Activated naive CD4-positive, alpha-beta T cell treated with anti-CD3 and anti-CD28 coated beads for 36 hours (primary cell): ENCODE measurements at regions of chr2 and their contacts with region 1.

Region 1: DNA sequence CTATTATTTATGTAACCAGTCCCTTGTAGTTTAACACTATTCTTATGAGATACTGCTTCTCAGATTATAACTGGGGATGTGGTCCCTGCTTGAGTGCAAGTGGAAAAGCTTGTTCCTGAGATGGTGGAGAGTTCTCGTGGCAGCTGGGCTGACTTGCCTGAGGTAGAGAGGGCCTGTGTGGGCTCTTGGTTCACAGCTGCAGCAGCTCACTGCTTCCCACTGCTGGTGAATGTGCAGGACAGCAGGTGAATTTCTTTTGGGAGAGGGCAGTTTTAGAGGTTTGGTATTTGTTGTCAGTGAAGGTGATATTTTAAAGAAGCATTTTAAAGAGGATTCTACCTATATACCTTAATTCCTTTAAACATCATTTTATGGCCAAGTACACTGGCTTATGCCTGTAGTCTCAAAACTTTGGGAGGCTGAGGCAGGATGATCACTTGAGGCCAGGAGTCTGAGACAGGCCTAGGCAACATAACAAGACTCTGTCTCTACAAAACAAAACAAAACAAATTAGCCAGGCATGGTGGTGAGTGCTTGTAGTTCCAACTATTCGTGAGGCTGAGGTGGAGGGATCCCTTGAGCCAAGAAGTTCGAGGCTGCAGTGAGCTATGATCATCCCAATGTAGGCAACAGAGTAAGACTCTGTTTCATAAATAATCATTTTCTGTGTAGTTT is 94.8 kb downstream of the MTA3 start:
- DNase-seq: peak; percentile 80
- H3K4me3 Mint-ChIP-seq: no peak overlapping the region
- H3K27ac Mint-ChIP-seq: peak overlapping the region; percentile 57
- H3K4me1 Mint-ChIP-seq: peaks cover 17% of the 10 kb centered on the region
- H3K27me3 Mint-ChIP-seq: no peaks in the 10 kb centered on the region

Region 2: DNA sequence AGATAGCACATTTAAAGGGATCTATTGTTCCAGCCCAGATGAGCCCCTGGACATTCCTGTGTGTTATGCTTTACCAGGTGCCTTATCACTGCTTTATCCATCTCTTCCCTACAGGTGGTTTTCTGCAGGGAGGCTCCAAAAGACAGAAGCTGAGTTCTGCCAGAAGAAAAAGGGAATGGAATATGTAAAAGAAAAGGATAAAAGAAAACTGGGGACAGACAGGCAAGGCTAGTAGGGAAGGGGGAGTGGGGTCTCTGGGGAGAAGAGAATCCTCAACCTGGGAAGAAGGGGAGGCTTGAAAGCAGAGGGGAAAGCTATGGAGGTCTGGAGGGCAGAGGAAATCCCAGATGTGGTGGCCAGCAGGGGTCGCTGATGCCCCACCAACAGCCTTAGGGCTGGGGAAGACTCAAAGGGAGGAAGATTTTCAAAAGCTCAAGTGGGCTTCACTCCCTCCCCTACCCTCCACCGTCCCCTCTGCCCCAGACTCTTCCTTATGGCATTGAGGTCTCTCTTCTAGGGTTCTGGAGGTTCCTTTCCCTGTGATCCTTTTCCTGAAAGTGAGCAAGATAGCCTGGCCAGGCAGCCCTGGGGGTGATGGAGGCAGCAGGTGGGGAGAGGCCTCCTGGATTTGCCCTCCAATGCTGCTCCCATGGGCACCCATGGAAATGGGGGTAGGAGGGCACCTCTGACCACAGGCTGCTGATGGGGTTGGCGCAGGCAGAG is 793.5 kb before region 1 on chr2:
- CTCF ChIA-PET with region 1: no interaction called
- intact Hi-C with region 1: loop called (anchors 5 kb)
- DNase-seq: peak; percentile 81
- H3K4me3 Mint-ChIP-seq: no peak overlapping the region
- H3K27ac Mint-ChIP-seq: no peak overlapping the region
- H3K4me1 Mint-ChIP-seq: no peaks in the 10 kb centered on the region
- H3K27me3 Mint-ChIP-seq: no peaks in the 10 kb centered on the region

Region 3: GRCh38 chr2:42513257-42513918 is 149.9 kb before region 1 on chr2:
- CTCF ChIA-PET with region 1: interaction called, 25 read pairs
- intact Hi-C with region 1: loop called (anchors 1 kb)
- DNase-seq: peak; percentile 32
- H3K4me3 Mint-ChIP-seq: no peak overlapping the region
- H3K27ac Mint-ChIP-seq: no peak overlapping the region
- H3K4me1 Mint-ChIP-seq: peaks cover 9% of the 10 kb centered on the region
- H3K27me3 Mint-ChIP-seq: no peaks in the 10 kb centered on the region

Region 4: DNA sequence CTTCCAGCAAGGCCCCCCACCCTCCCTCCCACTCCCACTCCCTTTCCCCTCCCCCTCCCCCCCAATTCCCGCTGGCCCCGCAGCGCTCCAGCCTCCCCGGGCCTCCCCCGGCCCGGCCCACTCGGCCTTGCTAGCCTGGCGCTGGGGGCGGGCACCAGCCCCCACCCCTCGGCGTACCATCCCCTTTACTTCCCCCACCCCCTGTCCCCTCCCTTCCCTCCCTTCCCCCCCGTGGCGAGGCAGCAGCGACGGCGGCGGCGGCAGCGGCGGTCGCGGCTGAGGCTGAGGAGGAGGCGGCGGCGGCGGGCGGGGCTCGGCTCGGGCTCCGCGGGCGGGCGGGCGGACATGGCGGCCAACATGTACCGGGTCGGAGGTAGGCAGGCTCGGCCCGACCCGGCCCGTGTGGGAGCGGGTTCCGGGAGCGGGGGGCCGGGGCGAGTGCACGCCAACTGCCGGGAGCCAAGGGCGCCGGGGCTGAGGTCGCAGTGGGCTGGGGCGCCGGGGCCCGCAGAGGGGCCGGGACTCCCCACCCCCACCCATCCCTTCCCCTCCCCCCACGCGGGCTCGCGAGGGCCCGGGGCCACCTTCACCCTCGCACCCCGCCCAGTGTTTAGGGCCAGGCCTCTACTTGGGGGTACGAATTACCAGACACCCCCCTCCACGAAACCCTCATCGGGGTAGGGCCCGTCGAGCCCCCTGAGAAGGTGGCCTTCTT is 94.7 kb before region 1 on chr2 and contains the start of gene MTA3:
- CTCF ChIA-PET with region 1: interaction called, 7 read pairs
- intact Hi-C with region 1: loop called (anchors 2 kb)
- DNase-seq: peak; percentile 66
- H3K4me3 Mint-ChIP-seq: peak within 1 kb of the TSS; percentile 88
- H3K27ac Mint-ChIP-seq: peak within 1 kb of the TSS; percentile 90
- H3K4me1 Mint-ChIP-seq: peaks cover 26% of the 10 kb centered on the region
- H3K27me3 Mint-ChIP-seq: no peaks in the 10 kb centered on the region
- total RNA-seq, gene MTA3: 31.9 to 38.0 TPM

Region 5: GRCh38 chr2:42652086-42652485 is 11.2 kb before region 1 on chr2:
- CTCF ChIA-PET with region 1: interaction called, 19 read pairs
- intact Hi-C with region 1: no loop called
- DNase-seq: peak; percentile 56
- H3K4me3 Mint-ChIP-seq: peak overlapping the region; percentile 54
- H3K27ac Mint-ChIP-seq: peak overlapping the region; percentile 83
- H3K4me1 Mint-ChIP-seq: peaks cover 70% of the 10 kb centered on the region
- H3K27me3 Mint-ChIP-seq: no peaks in the 10 kb centered on the region